HepG2 (cell line): ENCODE measurements at regions of chr7 and their contacts with region 1.

Region 1: GRCh38 chr7:33547880-33548279 is 357.5 kb upstream of the BMPER start:
- DNase-seq: peak; percentile 29
- ATAC-seq: peak; percentile 54; the same call in 2 of the 3 replicates
- H3K4me3 ChIP-seq: no peak overlapping the region
- H3K27ac ChIP-seq: no peak overlapping the region
- H3K4me1 ChIP-seq: peaks cover 10% of the 10 kb centered on the region; the same call in 1 of the 2 replicates
- H3K27me3 ChIP-seq: no peaks in the 10 kb centered on the region
- CTCF ChIP-seq: no peak
- EP300 ChIP-seq: no peak
- POLR2A ChIP-seq: no peak
- RAD21 ChIP-seq: no peak

Region 2: GRCh38 chr7:33388332-33388731 is 159.5 kb before region 1 on chr7:
- CTCF ChIA-PET with region 1: no interaction called
- POLR2A ChIA-PET with region 1: no interaction called
- in situ Hi-C with region 1: no loop called
- intact Hi-C with region 1: no loop called
- DNase-seq: no peak
- ATAC-seq: no peak
- H3K4me3 ChIP-seq: no peak overlapping the region
- H3K27ac ChIP-seq: no peak overlapping the region
- H3K4me1 ChIP-seq: no peaks in the 10 kb centered on the region
- H3K27me3 ChIP-seq: no peaks in the 10 kb centered on the region
- CTCF ChIP-seq: no peak
- EP300 ChIP-seq: no peak
- POLR2A ChIP-seq: no peak
- RAD21 ChIP-seq: no peak

Region 3: GRCh38 chr7:33511778-33512177 is 36.1 kb before region 1 on chr7:
- CTCF ChIA-PET with region 1: no interaction called
- POLR2A ChIA-PET with region 1: no interaction called
- in situ Hi-C with region 1: no loop called
- intact Hi-C with region 1: no loop called
- DNase-seq: no peak
- ATAC-seq: no peak
- H3K4me3 ChIP-seq: no peak overlapping the region
- H3K27ac ChIP-seq: no peak overlapping the region
- H3K4me1 ChIP-seq: no peaks in the 10 kb centered on the region
- H3K27me3 ChIP-seq: no peaks in the 10 kb centered on the region
- CTCF ChIP-seq: no peak
- EP300 ChIP-seq: no peak
- POLR2A ChIP-seq: no peak
- RAD21 ChIP-seq: no peak

Region 4: DNA sequence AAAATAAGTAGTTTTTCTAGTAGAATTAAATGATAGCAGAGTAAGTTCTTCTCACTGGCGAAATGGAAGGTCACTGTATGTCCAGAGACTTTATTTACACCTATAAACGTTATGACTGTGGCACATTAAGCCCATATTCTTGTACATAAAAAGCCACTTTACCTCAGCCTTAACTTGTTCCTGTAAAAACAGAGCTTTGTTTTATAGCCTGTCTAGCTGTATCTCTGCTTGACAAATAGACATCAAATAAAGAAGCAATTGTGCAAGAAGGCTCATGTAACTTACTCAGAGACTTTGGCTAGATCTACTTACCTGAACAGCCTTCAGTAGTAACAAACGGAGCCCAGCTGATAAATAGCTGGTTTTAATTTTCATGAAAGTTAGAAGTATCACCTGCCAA is 33.4 kb after region 1 on chr7:
- CTCF ChIA-PET with region 1: no interaction called
- POLR2A ChIA-PET with region 1: no interaction called
- in situ Hi-C with region 1: no loop called
- intact Hi-C with region 1: loop called (anchors 5 kb)
- DNase-seq: no peak
- ATAC-seq: no peak
- H3K4me3 ChIP-seq: no peak overlapping the region
- H3K27ac ChIP-seq: no peak overlapping the region
- H3K4me1 ChIP-seq: no peaks in the 10 kb centered on the region
- H3K27me3 ChIP-seq: no peaks in the 10 kb centered on the region
- CTCF ChIP-seq: no peak
- EP300 ChIP-seq: no peak
- POLR2A ChIP-seq: no peak
- RAD21 ChIP-seq: no peak

Region 5: DNA sequence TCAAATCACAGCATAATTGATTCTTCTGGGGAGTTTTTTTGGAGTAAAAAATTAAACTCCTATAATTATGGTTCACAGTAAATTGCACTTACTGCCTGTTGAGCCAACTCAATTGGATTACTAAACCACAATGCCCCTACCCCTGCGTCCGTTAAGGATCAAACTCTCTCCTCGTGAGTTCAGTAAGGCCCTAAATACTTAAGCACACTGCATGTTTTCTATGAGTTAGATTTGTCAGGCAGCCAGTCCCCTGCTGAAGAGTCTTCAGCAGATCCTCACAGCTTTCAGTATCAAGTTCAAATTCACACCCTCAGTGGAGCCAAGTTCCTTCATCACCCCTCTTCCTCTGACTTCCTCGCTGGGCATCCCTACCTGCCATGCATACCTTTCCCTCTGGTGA is 82.5 kb after region 1 on chr7:
- CTCF ChIA-PET with region 1: no interaction called
- POLR2A ChIA-PET with region 1: no interaction called
- in situ Hi-C with region 1: no loop called
- intact Hi-C with region 1: no loop called
- DNase-seq: no peak
- ATAC-seq: no peak
- H3K4me3 ChIP-seq: no peak overlapping the region
- H3K27ac ChIP-seq: no peak overlapping the region
- H3K4me1 ChIP-seq: peaks cover 9% of the 10 kb centered on the region; the same call in 1 of the 2 replicates
- H3K27me3 ChIP-seq: peaks cover 0 to 1% of the 10 kb centered on the region in 2 experiments; a peak in 1 of 5 replicates
- CTCF ChIP-seq: no peak
- EP300 ChIP-seq: no peak
- POLR2A ChIP-seq: no peak
- RAD21 ChIP-seq: no peak